K562 (cell line): ENCODE measurements at regions of chr17 and their contacts with region 1.

Region 1: GRCh38 chr17:63621766-63622519 is at the start of gene MAP3K3:
- DNase-seq: peak; percentile 98 to 99 (median 99)
- ATAC-seq: peak; percentile 96
- H3K4me3 ChIP-seq: peak within 1 kb of the TSS; percentile 71
- H3K27ac ChIP-seq: peak within 1 kb of the TSS; percentile 43; the same call in 2 of the 3 replicates
- H3K4me1 ChIP-seq: peaks cover 10 to 18% of the 10 kb centered on the region in 2 experiments; a peak in 4 of 5 replicates
- H3K27me3 ChIP-seq: no peaks in the 10 kb centered on the region
- CTCF ChIP-seq: peak in 2 of 3 experiments; percentile 30 to 35; a peak in 2 of 6 replicates
- EP300 ChIP-seq: no peak
- POLR2A ChIP-seq: peak; percentile 88
- RAD21 ChIP-seq: peak in 1 of 2 experiments; percentile 23; a peak in 2 of 4 replicates
- polyA plus RNA-seq, gene MAP3K3: 0.69 to 1.7 TPM

Region 2: DNA sequence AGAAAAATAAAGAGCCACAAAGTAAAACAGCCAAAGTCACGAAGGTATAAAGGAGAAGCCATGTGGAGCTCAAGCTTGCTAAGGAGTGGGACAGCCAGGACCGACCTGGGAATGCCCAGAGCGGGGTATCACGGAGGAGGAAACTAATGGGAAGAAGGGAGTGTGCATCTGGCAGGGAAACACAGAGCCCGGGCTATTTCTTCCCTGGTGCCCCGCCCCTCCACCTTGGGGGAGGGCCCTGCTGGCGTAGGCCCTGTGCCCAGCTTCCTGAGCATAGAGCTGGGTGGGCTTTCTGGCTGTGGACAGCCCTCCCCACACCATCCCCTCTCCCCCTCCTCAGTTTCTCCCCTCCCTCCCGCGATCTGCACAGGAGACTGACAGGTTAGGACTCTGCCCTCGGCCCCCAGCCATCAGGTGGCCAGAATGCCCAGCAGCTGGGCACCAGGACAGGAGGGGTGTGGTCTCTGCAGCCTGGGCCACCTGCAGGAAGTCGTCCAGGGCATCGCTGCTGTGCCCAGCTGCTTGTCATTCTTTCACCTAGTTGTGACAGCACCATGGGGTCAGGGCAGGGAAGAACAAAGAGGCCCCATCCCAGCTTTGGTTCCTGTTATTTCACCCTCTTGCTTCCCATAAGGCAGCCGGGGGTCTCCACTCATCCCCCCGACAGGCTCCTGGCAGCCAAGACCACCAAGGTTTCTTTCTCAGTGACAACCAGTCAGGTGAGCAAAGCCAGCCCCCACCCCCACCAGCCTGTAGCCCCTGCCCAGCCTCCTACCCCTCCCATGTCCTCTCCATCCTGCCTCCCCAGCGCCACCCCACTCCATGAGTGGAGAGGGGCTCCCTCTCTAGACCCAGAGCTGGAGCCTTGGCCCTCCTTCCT is 78.8 kb before region 1 on chr17:
- CTCF ChIA-PET with region 1: no interaction called
- POLR2A ChIA-PET with region 1: no interaction called
- in situ Hi-C with region 1: no loop called
- intact Hi-C with region 1: no loop called
- DNase-seq: no peak
- ATAC-seq: no peak
- H3K4me3 ChIP-seq: no peak overlapping the region
- H3K27ac ChIP-seq: no peak overlapping the region
- H3K4me1 ChIP-seq: peaks cover 0 to 16% of the 10 kb centered on the region in 2 experiments; a peak in 2 of 5 replicates
- H3K27me3 ChIP-seq: peaks cover 13 to 19% of the 10 kb centered on the region in 2 experiments; a peak in 4 of 5 replicates
- CTCF ChIP-seq: no peak
- EP300 ChIP-seq: no peak
- POLR2A ChIP-seq: no peak
- RAD21 ChIP-seq: no peak

Region 3: GRCh38 chr17:63611354-63611753 is 10.6 kb before region 1 on chr17:
- CTCF ChIA-PET with region 1: interaction called, 3 read pairs
- POLR2A ChIA-PET with region 1: interaction called, 14 read pairs
- in situ Hi-C with region 1: no loop called
- intact Hi-C with region 1: no loop called
- DNase-seq: no peak
- ATAC-seq: no peak
- H3K4me3 ChIP-seq: no peak overlapping the region
- H3K27ac ChIP-seq: no peak overlapping the region
- H3K4me1 ChIP-seq: no peaks in the 10 kb centered on the region
- H3K27me3 ChIP-seq: no peaks in the 10 kb centered on the region
- CTCF ChIP-seq: no peak
- EP300 ChIP-seq: no peak
- POLR2A ChIP-seq: no peak
- RAD21 ChIP-seq: no peak

Region 4: DNA sequence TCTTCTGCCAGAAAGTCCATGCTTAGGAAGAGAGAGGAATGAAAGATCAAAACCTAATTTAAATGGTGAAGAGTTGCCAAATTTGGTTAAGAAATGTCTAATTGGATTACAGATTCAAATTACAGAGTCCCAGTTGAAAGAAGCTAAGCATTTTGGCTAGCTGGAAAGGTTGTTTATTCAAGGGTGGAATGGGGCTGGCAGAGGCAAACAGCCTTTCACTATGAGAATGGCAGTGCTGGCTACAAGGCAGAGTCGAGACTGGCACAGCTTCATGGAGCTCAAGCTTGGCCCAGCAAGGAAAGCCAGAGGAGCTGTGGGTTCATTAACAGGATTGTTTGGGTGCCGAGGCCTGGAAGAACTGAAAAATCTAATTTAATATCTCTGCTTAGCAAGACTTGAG is 13.8 kb after region 1 on chr17:
- CTCF ChIA-PET with region 1: no interaction called
- POLR2A ChIA-PET with region 1: interaction called, 10 read pairs
- in situ Hi-C with region 1: no loop called
- intact Hi-C with region 1: no loop called
- DNase-seq: no peak
- ATAC-seq: no peak
- H3K4me3 ChIP-seq: no peak overlapping the region
- H3K27ac ChIP-seq: no peak overlapping the region
- H3K4me1 ChIP-seq: peaks cover 3 to 23% of the 10 kb centered on the region in 2 experiments; a peak in 4 of 5 replicates
- H3K27me3 ChIP-seq: no peaks in the 10 kb centered on the region
- CTCF ChIP-seq: no peak
- EP300 ChIP-seq: no peak
- POLR2A ChIP-seq: no peak
- RAD21 ChIP-seq: no peak

Region 5: DNA sequence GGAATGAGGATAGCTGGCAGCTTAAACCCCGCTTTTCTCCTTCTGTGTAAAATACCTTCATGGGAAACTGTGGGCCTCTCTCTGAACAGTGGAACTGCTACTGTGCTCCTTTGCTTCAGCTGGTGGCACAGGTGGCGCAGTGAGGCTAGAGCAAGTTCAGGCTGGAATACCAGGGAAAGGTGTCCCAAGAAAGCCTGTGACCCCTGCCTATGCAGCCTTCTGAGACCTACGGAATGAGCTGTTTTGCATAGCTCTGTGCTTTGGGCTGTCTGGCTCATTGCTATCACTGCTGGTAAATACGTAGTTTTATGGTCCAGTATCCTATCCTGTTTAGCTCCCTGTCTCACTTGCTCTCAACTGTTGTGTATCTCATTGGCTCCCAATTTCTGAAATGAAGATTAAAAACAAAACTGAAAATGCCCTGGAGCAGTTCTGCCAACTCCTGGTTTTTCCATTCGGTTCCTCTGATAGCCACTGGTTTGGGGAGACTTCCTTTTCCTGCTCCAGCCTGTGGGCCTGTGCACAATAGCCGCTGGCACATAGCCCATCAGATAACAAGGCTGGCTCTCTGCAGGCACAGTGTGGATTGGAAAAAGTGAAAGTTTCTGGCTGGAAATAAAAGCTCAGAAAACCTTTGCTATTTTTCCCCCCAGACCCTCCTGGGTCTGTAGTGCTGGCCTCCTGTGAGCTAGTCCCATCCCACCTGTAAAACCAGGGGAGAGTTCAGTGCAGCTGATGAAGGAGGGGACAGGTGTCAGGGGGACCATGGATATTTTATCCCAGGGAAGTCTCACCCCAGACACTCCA is 53.9 kb after region 1 on chr17:
- CTCF ChIA-PET with region 1: no interaction called
- POLR2A ChIA-PET with region 1: interaction called, 3 read pairs
- in situ Hi-C with region 1: no loop called
- intact Hi-C with region 1: loop called (anchors 2 kb)
- DNase-seq: peak; percentile 64 to 95 (median 76)
- ATAC-seq: peak; percentile 92
- H3K4me3 ChIP-seq: peak overlapping the region; percentile 3; the same call in 1 of the 2 replicates
- H3K27ac ChIP-seq: peak overlapping the region; percentile 62
- H3K4me1 ChIP-seq: peaks cover 10 to 24% of the 10 kb centered on the region in 2 experiments
- H3K27me3 ChIP-seq: no peaks in the 10 kb centered on the region
- CTCF ChIP-seq: no peak
- EP300 ChIP-seq: peak; percentile 45; the same call in 1 of the 2 replicates
- POLR2A ChIP-seq: no peak
- RAD21 ChIP-seq: peak in 1 of 2 experiments; percentile 26; a peak in 2 of 4 replicates

Region 6: DNA sequence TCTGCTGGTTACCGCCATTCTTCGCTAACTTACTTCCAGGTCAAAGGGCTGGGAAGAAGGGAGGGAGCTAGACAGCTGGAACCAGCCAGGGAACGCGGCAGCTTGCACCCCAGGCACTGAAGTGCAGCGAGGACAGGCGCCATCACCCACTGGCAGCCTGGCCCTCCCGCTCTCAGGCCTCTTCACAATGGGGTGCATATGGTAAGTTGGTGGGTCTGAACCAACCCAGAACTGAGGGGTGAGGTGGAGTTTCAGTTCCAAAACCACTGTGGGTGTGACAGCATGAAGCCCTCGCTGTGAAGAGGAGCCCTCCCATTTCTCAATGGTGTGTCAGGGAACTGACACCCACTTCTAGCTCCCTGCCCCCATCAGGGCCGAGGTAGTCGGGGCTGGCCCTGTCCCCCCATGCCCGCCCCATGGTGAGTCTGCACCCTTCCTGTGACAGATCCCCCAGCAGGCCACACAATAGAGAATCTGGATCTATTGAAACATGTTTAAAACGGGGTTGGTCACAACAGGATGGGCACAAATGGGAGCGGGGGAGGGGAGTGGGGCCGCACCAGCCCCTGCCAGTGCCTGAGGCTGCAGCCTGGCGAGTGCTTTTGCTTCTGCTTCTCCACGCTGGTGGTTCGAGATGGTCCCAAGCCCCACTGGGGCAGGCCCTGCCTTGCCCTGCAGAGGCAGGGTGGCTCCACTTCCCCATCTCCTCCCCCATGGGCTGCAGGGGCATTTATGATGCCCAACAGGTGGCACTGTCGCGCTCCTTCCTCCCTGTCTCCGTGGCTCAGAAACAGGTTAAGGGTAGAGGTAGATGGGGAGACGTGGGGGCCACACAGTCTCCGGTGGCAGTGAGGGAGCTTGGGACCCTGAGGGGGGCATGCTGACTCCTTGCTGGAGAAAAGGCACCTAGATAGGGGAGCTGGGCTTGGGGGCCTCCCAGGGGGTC is 75.7 kb after region 1 on chr17:
- CTCF ChIA-PET with region 1: no interaction called
- POLR2A ChIA-PET with region 1: no interaction called
- in situ Hi-C with region 1: no loop called
- intact Hi-C with region 1: loop called (anchors 5 kb)
- DNase-seq: peak; percentile 40 to 65 (median 56)
- ATAC-seq: peak; percentile 61
- H3K4me3 ChIP-seq: no peak overlapping the region
- H3K27ac ChIP-seq: no peak overlapping the region
- H3K4me1 ChIP-seq: peaks cover 0 to 47% of the 10 kb centered on the region in 2 experiments; a peak in 2 of 5 replicates
- H3K27me3 ChIP-seq: no peaks in the 10 kb centered on the region
- CTCF ChIP-seq: peak; percentile 59 to 84 (median 76); a peak in 5 of 6 replicates
- EP300 ChIP-seq: no peak
- POLR2A ChIP-seq: no peak
- RAD21 ChIP-seq: peak in 1 of 2 experiments; percentile 59; a peak in 2 of 4 replicates

Region 7: DNA sequence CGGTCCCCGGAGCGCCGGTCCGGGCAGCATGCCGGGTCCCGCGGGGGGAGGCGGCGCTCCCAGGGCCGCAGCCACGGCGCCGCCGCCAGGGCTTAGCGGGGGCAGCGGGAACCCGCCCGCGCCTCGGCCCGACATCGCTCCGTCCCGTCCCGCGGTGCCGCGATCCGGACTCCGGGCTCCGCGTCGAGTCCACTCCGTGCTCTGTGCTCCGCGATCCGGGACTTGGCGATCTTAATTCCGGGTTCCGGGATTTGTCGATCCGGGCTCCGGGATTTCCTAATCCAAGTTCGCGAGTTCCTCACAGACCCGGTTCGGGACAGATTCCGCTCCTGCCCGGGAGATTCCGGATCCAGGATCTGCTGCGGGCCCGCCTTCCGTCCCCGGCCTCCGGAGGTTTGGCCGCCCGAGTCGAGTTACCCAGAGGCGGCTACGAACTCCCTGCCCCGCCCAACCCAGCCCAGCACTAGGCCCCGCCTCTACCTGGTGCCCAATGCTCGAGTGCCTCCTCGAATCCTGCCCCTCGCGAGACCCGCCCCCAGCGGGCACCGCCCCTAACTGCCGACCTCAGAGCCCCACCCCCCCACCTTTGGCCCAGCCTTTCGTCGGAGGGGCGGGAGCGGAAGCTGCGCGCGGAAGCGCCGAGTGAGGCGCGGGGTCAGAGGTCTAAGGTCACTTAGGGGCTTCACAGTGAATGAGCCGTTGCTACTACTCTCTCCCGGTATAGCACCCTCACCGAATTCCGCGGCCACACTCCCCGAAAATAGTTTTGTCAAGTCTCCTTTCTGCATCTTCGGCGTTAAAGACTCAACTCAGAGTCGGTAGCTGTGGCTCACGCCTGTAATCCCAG is 220.8 kb after region 1 on chr17 and contains the start of gene SMARCD2:
- CTCF ChIA-PET with region 1: no interaction called
- POLR2A ChIA-PET with region 1: no interaction called
- in situ Hi-C with region 1: no loop called
- intact Hi-C with region 1: loop called (anchors 10 kb)
- DNase-seq: peak; percentile 94 to 99 (median 96)
- ATAC-seq: peak; percentile 90
- H3K4me3 ChIP-seq: peak within 1 kb of the TSS; percentile 95
- H3K27ac ChIP-seq: peak within 1 kb of the TSS; percentile 93
- H3K4me1 ChIP-seq: peaks cover 23 to 45% of the 10 kb centered on the region in 2 experiments
- H3K27me3 ChIP-seq: no peaks in the 10 kb centered on the region
- CTCF ChIP-seq: no peak
- EP300 ChIP-seq: peak; percentile 72
- POLR2A ChIP-seq: peak; percentile 89
- RAD21 ChIP-seq: peak in 1 of 2 experiments; percentile 18; a peak in 1 of 4 replicates
- polyA plus RNA-seq, gene SMARCD2: 1.7 to 5.7 TPM

Region 8: GRCh38 chr17:63919311-63919723 is 297.4 kb after region 1 on chr17:
- CTCF ChIA-PET with region 1: no interaction called
- POLR2A ChIA-PET with region 1: no interaction called
- in situ Hi-C with region 1: no loop called
- intact Hi-C with region 1: no loop called
- DNase-seq: peak; percentile 75 to 81 (median 78)
- ATAC-seq: peak; percentile 96
- H3K4me3 ChIP-seq: no peak overlapping the region
- H3K27ac ChIP-seq: no peak overlapping the region
- H3K4me1 ChIP-seq: no peaks in the 10 kb centered on the region; a peak in 1 of 5 replicates
- H3K27me3 ChIP-seq: peaks cover 3 to 29% of the 10 kb centered on the region in 2 experiments; a peak in 4 of 5 replicates
- CTCF ChIP-seq: peak; percentile 88 to 92 (median 91)
- EP300 ChIP-seq: no peak
- POLR2A ChIP-seq: no peak
- RAD21 ChIP-seq: peak; percentile 87 to 94